Natural killer cell (primary cell): ENCODE measurements at regions of chr10 and their contacts with region 1.

Region 1: DNA sequence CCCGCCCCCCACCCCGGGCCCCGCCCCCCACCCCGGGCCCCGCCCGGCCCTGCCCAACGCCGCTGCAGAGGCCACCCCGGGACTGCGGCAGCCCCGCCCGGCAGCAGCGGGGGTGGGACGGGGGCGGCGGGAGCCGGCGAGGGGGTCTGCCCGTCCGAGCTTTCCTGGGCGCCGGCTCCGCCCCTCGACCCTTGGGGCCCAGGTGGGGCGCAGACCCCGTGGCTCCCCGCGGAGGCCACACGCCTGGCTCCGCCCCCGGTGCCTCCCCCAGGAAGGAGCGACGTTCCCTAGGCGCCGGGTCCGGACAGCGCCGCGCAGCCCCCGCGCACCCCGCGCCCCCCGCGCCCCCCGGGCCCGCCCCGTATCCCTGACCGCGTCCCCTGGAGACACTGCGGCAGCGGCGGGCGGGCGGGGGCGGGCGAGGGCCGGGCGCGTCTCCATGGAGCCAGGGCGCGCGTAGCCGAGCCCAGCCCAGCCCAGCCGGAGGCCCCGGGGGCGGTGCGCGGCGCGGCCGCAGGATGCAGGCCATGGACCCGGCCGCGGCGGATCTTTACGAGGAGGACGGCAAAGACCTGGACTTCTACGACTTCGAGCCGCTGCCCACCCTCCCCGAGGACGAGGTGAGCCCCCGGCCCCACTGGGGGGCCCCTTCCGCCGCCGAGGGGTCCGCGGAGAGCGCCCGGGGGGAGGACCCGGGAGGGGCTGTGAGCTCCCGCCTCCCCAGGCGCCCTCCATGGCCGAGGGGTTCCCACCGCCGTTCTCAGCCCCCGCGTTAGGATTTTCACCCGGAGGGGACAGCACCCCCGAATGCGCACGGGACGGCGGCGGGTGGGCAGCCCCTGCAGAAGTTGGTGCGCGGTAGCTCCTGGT is at the start of gene KNDC1:
- DNase-seq: peak; percentile 28 to 46
- ATAC-seq: peak; percentile 73 to 86 (median 77)
- H3K4me3 ChIP-seq: no peak within 1 kb of the TSS
- H3K4me3 Mint-ChIP-seq: peak within 1 kb of the TSS; percentile 63
- H3K27ac ChIP-seq: no peak within 1 kb of the TSS
- H3K27ac Mint-ChIP-seq: no peak within 1 kb of the TSS
- H3K4me1 ChIP-seq: peaks cover 12% of the 10 kb centered on the region
- H3K4me1 Mint-ChIP-seq: no peaks in the 10 kb centered on the region
- H3K27me3 ChIP-seq: peaks cover 14% of the 10 kb centered on the region
- H3K27me3 Mint-ChIP-seq: peaks cover 5 to 12% of the 10 kb centered on the region in 2 donors
- CTCF ChIP-seq: no peak
- total RNA-seq, gene KNDC1: 2.1 to 5.9 TPM in 2 of 3 donors, not detected in the other

Region 2: GRCh38 chr10:133050043-133050776 is 110.0 kb before region 1 on chr10:
- intact Hi-C with region 1: no loop called
- DNase-seq: no peak
- ATAC-seq: no peak
- H3K4me3 ChIP-seq: no peak overlapping the region
- H3K4me3 Mint-ChIP-seq: no peak overlapping the region
- H3K27ac ChIP-seq: no peak overlapping the region
- H3K27ac Mint-ChIP-seq: no peak overlapping the region
- H3K4me1 ChIP-seq: no peaks in the 10 kb centered on the region
- H3K4me1 Mint-ChIP-seq: no peaks in the 10 kb centered on the region
- H3K27me3 ChIP-seq: no peaks in the 10 kb centered on the region
- H3K27me3 Mint-ChIP-seq: peaks cover 0 to 3% of the 10 kb centered on the region in 2 donors
- CTCF ChIP-seq: no peak

Region 3: GRCh38 chr10:133100706-133101415 is 59.3 kb before region 1 on chr10:
- intact Hi-C with region 1: no loop called
- DNase-seq: peak in 1 of 2 donors; percentile 9
- ATAC-seq: peak in 1 of 3 donors; percentile 58
- H3K4me3 ChIP-seq: no peak overlapping the region
- H3K4me3 Mint-ChIP-seq: no peak overlapping the region
- H3K27ac ChIP-seq: no peak overlapping the region
- H3K27ac Mint-ChIP-seq: no peak overlapping the region
- H3K4me1 ChIP-seq: peaks cover 10% of the 10 kb centered on the region
- H3K4me1 Mint-ChIP-seq: peaks cover 0 to 6% of the 10 kb centered on the region in 2 donors
- H3K27me3 ChIP-seq: peaks cover 7% of the 10 kb centered on the region
- H3K27me3 Mint-ChIP-seq: peaks cover 5 to 9% of the 10 kb centered on the region in 2 donors
- CTCF ChIP-seq: no peak

Region 4: DNA sequence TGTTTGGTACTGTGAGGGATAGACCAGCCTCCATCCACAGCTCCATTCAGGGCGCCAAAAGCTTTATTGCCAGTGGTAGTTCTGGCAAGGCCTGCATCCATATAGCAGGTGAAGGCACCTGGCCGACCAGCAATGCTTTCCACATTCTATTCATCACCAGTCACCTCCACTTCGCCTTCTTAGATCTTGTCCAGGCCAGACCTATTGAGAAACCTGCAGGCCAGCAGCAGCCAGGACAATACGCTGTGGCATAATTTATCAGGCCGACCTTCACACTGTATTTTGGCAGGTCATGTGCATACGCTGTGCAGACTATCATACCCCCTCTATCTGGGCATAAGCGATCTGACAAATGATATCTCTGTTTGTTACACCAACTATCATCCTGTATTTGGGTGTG is 15.4 kb before region 1 on chr10:
- intact Hi-C with region 1: loop called (anchors 2 kb)
- DNase-seq: no peak
- ATAC-seq: no peak
- H3K4me3 ChIP-seq: no peak overlapping the region
- H3K4me3 Mint-ChIP-seq: no peak overlapping the region
- H3K27ac ChIP-seq: no peak overlapping the region
- H3K27ac Mint-ChIP-seq: no peak overlapping the region
- H3K4me1 ChIP-seq: peaks cover 4% of the 10 kb centered on the region
- H3K4me1 Mint-ChIP-seq: peaks cover 0 to 12% of the 10 kb centered on the region in 2 donors
- H3K27me3 ChIP-seq: no peaks in the 10 kb centered on the region
- H3K27me3 Mint-ChIP-seq: peaks cover 44 to 48% of the 10 kb centered on the region in 2 donors
- CTCF ChIP-seq: no peak